ENCODE measurements at regions of chr1 and their contacts with region 1.

Region 1: DNA sequence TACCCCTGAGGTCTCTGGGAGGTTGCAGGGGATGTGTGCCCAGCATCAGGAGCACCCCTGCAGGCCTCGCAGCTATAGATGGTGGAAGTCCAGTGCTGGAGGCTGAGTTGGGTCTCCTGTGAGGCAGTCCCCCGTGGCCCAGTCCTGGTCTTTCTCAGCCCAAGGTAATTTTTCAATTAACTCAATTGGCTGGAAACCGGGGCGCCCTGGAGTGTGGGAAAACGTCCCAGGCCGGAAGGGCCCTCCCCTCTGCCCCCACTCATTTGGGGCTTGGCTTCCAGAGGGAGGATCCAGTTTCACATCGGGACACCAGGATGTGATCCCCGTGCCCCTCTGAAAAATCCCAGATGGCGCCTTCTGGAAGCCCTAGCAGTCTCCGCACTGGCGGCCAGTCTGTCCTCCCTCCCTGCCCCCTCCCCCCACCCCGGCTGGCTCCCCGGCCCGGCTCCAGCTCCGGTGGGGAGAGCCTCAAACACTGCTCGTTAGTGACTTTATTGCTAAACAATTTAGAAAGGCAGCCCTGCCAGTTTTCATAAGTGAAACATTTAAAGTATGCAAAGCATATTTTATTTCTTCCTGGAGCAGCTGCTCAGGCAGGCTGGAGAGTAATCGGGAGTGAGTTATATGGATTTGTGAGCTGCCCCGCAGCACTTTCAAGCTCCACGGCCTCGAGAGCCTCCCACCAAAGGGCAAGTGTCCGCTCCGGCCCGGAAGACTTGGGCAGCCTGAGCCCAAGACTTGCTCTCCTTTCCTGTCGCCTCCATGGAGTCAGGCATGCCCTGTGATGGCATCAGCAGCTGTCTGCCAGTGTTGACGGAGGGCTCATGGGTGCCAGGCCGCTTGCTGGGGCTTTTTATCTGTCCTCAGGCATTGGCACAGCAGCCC is 208.2 kb upstream of the TMEM51 start:
- DNase-seq: peak; percentile 75
- H3K4me3 ChIP-seq: peak overlapping the region; percentile 60
- CTCF ChIP-seq: no peak

Region 2: DNA sequence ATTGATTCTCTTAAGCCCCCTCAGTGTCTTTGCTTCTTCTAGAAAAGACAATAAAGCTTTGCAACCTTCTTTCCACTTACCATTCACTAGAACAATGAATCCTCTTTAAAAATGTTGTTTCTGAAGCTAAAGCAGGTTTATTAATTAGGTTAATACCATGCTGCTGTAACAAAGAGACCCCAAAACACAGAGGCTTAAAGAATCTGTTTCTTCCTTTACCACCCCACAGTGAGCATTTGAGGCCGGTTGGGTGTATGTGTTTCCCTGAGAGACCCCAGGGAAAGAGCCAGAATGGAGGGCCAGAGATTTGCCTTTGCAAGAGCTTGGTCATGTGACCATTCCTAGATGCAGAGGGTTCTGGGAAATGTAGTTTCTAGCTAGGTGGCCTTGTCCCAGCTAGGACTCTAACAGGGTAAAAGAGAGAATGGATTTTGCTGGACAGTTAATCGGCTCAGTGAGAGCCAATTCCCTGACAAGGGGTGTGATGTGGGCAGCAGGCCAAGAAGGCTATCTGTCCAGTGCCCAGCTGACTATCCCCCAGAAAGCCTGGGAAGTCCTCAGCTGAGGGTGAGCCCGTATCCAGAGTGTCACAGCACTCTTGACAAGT is 16.4 kb after region 1 on chr1:
- CTCF ChIA-PET with region 1: interaction called, 12 read pairs
- POLR2A ChIA-PET with region 1: interaction called, 4 read pairs
- DNase-seq: no peak
- H3K4me3 ChIP-seq: no peak overlapping the region
- CTCF ChIP-seq: no peak

Region 3: DNA sequence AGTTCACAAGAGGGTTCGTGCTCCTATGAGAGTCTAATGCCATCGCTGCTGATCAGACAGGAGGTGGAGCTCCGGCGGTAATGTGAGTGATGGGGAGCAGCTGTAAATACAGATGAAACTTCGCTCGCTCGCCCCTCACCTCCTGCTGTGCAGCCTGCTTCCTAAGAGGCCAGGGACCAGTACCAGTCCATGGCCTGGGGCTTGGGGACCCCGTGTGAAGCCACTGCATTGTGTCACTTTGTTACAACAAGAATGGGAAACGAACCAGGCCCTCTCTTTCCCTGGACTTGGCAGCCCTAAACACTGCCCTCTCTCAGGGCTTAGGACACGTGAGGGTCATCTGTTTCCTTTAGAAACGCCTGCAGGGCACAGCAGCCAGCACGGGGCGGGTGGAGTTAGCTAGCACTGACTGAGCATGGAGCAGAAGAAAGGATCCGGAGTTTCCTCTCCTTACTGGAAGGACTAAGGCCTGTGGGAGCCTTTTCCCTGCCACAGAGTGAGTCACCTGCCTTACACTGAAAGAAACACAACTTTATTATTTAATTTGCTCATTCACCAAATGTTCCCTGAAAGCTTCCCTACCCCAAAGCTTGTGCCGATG is 23.0 kb after region 1 on chr1:
- CTCF ChIA-PET with region 1: interaction called, 12 read pairs
- POLR2A ChIA-PET with region 1: interaction called, 11 read pairs
- DNase-seq: peak; percentile 71
- H3K4me3 ChIP-seq: peak overlapping the region; percentile 20; the same call in 1 of the 2 replicates
- CTCF ChIP-seq: no peak

Measured in AG04449 (cell line).